BJ (cell line): ENCODE measurements at regions of chr7 and their contacts with region 1.

Region 1: DNA sequence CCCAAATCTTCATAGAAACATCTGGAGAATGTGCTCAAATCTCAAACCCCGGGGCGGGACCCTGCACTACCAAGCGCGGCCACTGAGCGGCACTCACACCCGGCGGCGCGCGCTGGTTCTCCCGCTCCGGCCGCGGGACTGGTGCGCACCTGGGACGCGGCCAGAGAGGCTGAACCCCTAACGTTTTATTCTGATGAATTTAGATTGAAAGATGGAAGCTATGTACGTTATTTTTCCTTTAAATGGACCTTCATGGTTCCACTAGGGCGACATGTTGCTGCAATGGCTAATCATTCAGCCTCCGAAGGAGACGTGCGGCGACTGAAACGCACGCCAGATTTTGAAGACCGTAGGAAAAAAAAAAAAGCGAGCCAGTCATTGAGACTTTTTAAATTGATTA is 107.0 kb upstream of the INSIG1 start:
- DNase-seq: no peak
- H3K4me3 ChIP-seq: no peak overlapping the region
- H3K27me3 ChIP-seq: no peaks in the 10 kb centered on the region; the same call in none of the 2 replicates
- CTCF ChIP-seq: peak; percentile 97

Region 2: DNA sequence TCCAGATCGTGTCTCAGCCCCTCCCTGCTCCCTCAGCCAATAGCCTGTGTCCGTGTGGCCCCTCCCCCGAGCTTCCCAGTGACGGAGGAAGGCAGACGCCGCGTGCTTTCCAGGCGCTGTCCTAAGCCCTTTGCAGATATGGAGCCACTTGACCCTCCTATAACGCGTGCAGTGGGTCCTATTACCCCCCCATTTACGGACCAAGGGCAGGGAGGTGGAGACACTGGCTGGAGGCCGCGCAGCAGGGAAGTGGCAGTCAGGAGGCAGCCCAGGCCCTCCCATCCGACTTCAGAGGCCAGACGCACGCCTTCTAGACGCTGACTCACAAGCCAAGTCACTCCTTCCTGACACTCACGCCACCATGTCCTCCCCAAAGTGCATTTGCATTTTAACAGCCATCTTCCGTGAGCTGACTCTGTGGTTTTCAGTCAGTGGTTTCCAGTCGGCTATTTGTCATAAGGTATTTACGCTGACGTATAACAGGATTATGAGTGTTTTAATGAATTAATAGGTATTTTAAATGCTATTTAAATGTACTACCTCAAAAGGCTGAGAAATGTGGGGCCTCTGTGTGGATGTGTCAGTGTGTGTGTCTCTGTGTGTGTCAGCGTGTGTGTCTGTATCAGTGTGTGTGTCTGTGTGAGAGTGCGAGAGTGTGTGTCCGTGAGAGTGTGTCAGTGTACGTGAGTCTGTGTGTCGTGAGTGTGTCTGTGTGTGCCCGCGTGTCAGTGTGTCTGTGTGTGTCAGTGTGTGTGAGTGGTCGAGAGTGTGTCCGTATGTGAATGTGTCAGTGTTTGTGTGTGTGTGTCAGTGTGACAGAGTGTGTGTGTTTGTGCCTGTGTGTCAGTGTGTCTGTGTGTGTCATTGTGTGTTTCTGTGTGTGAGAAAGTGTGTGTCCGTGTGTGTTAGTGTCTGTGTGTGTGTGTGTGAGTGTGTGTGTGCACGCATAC is 15.0 kb after region 1 on chr7:
- CTCF ChIA-PET with region 1: interaction called, 11 read pairs
- POLR2A ChIA-PET with region 1: no interaction called
- DNase-seq: peak; percentile 98
- H3K4me3 ChIP-seq: peak overlapping the region; percentile 30
- H3K27me3 ChIP-seq: no peaks in the 10 kb centered on the region
- CTCF ChIP-seq: no peak

Region 3: DNA sequence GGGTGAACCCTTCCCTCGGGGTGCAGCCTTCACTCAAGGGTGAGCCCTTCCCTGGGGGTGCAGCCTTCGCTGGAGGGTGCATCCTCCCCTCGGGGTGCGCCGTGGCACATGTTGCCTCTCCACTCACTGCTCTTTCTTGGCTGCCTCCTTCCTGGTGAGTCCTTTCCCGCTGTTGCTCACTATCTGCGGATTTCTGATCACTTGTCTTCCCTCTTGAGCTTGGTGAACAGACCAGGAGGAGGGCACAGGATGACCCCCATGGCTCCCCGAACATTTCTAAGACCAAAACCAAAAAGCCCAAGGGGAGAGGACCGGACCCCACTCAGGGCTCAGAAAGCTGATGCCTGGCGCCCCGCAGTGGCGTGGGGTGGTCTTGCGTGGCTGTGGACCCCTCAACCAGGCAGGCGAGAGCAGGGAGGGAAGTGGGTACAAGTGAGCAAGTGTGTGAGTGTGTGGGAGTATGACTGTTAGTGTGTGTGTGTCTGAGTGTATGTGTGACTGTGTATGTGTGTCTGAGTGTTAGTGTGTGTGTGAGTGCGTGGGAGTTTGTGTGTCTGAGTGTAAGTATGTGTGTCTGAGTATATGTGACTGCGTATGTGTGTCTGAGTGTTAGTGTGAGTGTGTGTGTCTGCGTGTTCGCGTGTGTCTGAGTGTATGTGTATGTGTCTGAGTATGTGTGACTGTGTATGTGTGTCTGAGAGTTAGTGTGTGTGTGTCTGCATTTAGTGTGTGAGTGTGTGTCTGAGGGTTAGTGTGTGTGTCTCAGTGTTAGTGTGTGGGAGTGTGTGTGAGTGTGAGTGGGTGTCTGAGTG is 72.8 kb after region 1 on chr7:
- CTCF ChIA-PET with region 1: no interaction called
- POLR2A ChIA-PET with region 1: no interaction called
- DNase-seq: no peak
- H3K4me3 ChIP-seq: no peak overlapping the region
- H3K27me3 ChIP-seq: peaks cover 2% of the 10 kb centered on the region; the same call in 1 of the 2 replicates
- CTCF ChIP-seq: no peak

Region 4: GRCh38 chr7:155298834-155299534 is 108.3 kb after region 1 on chr7:
- CTCF ChIA-PET with region 1: interaction called, 14 read pairs
- POLR2A ChIA-PET with region 1: no interaction called
- DNase-seq: peak; percentile 81
- H3K4me3 ChIP-seq: peak overlapping the region; percentile 54
- H3K27me3 ChIP-seq: no peaks in the 10 kb centered on the region
- CTCF ChIP-seq: peak; percentile 6; the same call in 1 of the 2 replicates

Region 5: DNA sequence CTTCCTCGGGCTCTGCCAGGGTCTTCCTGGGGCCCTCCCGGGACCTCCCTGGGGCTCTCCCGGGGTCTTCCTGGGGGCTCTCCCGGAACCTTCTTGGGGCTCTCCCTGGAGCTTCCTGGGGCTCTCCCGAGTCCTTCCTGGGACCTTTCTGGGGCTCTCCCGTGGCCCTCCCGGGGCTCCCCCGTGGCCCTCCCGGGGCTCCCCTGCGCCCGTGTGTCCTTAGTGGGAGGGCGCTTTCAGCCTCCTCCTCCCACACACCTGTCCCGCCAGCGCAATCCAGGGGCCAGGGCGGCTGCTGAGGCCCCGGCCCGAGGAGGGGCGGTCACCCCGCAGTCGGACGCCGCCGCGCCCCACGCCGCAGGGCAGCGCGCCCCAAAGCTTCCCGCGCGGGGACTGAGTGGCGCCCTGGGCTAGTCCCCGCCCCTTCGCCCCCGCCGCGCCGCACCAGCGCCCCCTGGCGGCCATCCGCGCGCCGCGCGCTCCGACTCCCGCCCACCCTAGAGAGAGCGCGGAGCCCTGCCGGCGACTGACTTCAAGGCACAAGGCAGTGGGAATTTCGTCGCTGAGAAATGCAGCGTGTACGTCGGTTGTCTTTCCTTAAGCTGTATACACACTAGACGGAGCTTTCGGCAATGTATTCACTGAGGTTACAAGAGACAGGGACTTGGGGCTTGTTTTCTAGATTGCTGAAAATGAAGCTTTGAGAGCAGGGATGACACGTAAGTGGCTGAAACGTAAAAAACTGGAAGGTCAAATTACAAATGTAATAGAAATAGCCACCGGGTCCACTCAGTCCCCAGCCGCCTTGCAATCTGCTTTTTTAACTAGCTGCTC is 154.1 kb after region 1 on chr7:
- CTCF ChIA-PET with region 1: interaction called, 84 read pairs
- POLR2A ChIA-PET with region 1: no interaction called
- DNase-seq: no peak
- H3K4me3 ChIP-seq: peak overlapping the region; percentile 25
- H3K27me3 ChIP-seq: peaks cover 3% of the 10 kb centered on the region; the same call in 1 of the 2 replicates
- CTCF ChIP-seq: peak; percentile 64